ENCODE measurements at regions of chr7 and their contacts with region 1.

Region 1: GRCh38 chr7:129343099-129343700 is 91.0 kb upstream of the STRIP2 start:
- DNase-seq: peak; percentile 38
- H3K4me3 Mint-ChIP-seq: no peak overlapping the region
- H3K27ac Mint-ChIP-seq: no peak overlapping the region
- H3K4me1 Mint-ChIP-seq: no peaks in the 10 kb centered on the region
- H3K27me3 Mint-ChIP-seq: no peaks in the 10 kb centered on the region
- CTCF ChIP-seq: peak; percentile 49

Region 2: GRCh38 chr7:129356176-129356575 is 13.0 kb after region 1 on chr7:
- CTCF ChIA-PET with region 1: interaction called, 11 read pairs
- intact Hi-C with region 1: no loop called
- DNase-seq: no peak
- H3K4me3 Mint-ChIP-seq: no peak overlapping the region
- H3K27ac Mint-ChIP-seq: no peak overlapping the region
- H3K4me1 Mint-ChIP-seq: peaks cover 7% of the 10 kb centered on the region
- H3K27me3 Mint-ChIP-seq: no peaks in the 10 kb centered on the region
- CTCF ChIP-seq: no peak

Region 3: GRCh38 chr7:129376076-129376777 is 33.0 kb after region 1 on chr7:
- CTCF ChIA-PET with region 1: interaction called, 23 read pairs
- intact Hi-C with region 1: no loop called
- DNase-seq: peak; percentile 77
- H3K4me3 Mint-ChIP-seq: no peak overlapping the region
- H3K27ac Mint-ChIP-seq: peak overlapping the region; percentile 44
- H3K4me1 Mint-ChIP-seq: peaks cover 31% of the 10 kb centered on the region
- H3K27me3 Mint-ChIP-seq: no peaks in the 10 kb centered on the region
- CTCF ChIP-seq: peak; percentile 50

Region 4: DNA sequence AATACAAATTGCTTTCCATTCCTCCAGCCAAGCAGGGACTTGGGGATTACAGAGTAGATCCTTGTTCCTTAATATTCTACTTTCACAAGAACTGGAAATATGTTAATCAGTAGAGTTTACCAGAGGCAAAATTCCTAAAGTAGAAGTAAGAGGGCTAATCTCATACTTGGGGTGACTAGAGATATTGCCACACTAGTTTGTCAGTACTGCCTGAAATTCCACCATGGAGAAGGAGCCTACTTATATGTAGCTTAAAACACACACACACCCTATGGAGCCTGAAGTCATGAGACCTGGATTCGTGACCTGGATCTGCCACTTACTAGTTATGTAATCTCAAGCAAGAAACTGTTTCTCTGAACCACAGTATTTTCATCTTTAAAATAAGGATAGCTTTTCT is 124.9 kb after region 1 on chr7:
- CTCF ChIA-PET with region 1: interaction called, 4 read pairs
- intact Hi-C with region 1: loop called (anchors 1 kb)
- DNase-seq: no peak
- H3K4me3 Mint-ChIP-seq: no peak overlapping the region
- H3K27ac Mint-ChIP-seq: no peak overlapping the region
- H3K4me1 Mint-ChIP-seq: no peaks in the 10 kb centered on the region
- H3K27me3 Mint-ChIP-seq: no peaks in the 10 kb centered on the region
- CTCF ChIP-seq: no peak